ENCODE measurements at regions of chr14 and their contacts with region 1.

Region 1: DNA sequence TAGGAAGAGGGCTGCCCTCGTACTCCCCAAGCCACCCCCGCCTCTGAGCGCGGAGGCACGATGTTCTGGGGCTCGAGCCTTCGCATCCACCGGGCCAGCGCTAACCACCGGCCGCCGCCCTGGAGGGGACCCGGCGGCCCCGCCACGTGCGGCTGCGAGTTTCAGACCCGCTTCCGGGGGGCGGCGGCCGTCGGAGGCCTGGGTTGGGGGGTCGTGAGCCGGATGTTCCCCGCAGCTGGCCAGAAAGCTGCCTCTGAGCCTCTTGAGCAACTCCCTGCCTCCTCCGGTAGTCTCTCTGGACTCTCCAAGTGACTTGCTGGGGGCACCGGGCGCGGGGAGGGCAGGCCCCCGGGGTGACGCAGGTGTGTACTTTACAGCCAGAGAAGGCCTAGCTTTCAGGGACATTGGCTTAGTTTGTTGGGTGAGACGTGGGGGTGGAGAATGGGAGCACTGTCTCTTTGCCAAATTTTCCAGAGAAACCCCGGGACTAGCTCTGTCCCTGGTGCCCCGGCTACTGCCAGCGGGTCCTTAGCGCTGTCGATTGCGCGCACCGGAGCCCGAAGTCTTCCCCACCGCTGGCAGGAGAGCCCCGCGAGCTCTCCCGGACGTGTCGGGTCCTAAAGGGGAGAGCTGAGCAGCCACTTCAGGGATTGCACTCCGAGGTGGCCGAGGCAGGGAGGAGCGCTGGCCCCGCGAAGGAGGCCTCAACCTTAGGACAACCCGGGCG is 15.6 kb downstream of the OTX2 start:
- DNase-seq: no peak
- H3K4me3 Mint-ChIP-seq: no peak overlapping the region
- H3K27ac Mint-ChIP-seq: no peak overlapping the region
- H3K4me1 Mint-ChIP-seq: peaks cover 8% of the 10 kb centered on the region
- H3K27me3 Mint-ChIP-seq: peaks cover 63% of the 10 kb centered on the region

Region 2: DNA sequence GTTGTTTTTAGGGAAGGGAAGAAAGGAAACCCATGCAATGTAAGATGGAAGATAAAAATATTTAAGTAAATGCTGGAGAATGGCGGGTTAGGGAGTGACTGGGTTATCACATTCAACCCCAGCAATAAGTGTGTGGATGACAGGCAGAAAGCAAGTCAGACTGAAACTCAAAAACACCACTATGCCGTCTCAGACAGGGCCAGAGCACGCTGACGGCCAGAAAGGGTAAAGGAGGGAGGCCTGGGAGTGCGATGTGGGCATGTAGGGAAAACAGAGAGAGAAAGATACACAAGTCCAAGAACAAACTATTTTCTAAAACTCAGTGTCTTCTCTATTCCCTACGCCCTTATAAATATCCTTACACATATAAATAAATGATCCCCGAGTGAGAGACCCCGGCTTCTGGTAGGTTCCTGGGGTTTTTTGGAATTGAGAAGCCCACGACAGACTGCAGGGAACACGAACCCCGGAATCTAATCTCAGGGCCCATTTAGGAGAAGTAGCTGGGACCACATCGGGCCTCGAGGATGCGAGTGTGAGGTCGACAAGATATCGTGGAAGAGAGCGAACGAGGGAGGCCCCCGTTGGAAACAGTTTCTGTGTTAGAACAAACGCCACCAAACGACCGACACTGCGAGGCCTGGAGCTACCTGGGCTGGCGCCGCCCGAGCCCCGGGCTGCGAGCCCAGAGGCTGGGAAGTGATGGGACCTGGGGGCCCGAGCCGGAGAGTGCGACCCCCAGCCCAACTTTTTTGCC is 16.3 kb after region 1 on chr14:
- intact Hi-C with region 1: loop called (anchors 1 kb)
- DNase-seq: no peak
- H3K4me3 Mint-ChIP-seq: no peak overlapping the region
- H3K27ac Mint-ChIP-seq: peak overlapping the region; percentile 84
- H3K4me1 Mint-ChIP-seq: peaks cover 17% of the 10 kb centered on the region
- H3K27me3 Mint-ChIP-seq: peaks cover 80% of the 10 kb centered on the region

Region 3: GRCh38 chr14:56874375-56874774 is 79.7 kb after region 1 on chr14:
- intact Hi-C with region 1: no loop called
- DNase-seq: no peak
- H3K4me3 Mint-ChIP-seq: no peak overlapping the region
- H3K27ac Mint-ChIP-seq: no peak overlapping the region
- H3K4me1 Mint-ChIP-seq: no peaks in the 10 kb centered on the region
- H3K27me3 Mint-ChIP-seq: no peaks in the 10 kb centered on the region

Measured in activated T-helper 1 cell treated with anti-CD3 and anti-CD28 coated beads, Interleukin-12 subunit alpha, Interleukin-12 subunit beta, Interleukin-2, Interleukin-4 antibody, amounts not matched to agents 30 ng/mL and 10 ng/mL and 1 ng/mL, durations not matched to agents 14 hours and 24 hours and 36 hours (primary cell).